CD8-positive, alpha-beta T cell (primary cell): ENCODE measurements at regions of chr1 and their contacts with region 1.

Region 1: GRCh38 chr1:185238447-185238846 is 78.6 kb downstream of the IVNS1ABP start:
- DNase-seq: peak in 2 of 9 experiments; percentile 24 to 55
- ATAC-seq: peak; percentile 38
- H3K4me3 ChIP-seq: no peak overlapping the region
- H3K4me3 Mint-ChIP-seq: no peak overlapping the region
- H3K27ac ChIP-seq: no peak overlapping the region
- H3K27ac Mint-ChIP-seq: no peak overlapping the region
- H3K4me1 ChIP-seq: peaks cover 3% of the 10 kb centered on the region
- H3K4me1 Mint-ChIP-seq: peaks cover 26% of the 10 kb centered on the region
- H3K27me3 ChIP-seq: no peaks in the 10 kb centered on the region
- H3K27me3 Mint-ChIP-seq: no peaks in the 10 kb centered on the region
- CTCF ChIP-seq: peak; percentile 74

Region 2: GRCh38 chr1:185281245-185281644 is 42.8 kb after region 1 on chr1:
- CTCF ChIA-PET with region 1: interaction called, 15 read pairs
- POLR2A ChIA-PET with region 1: interaction called, 6 read pairs
- intact Hi-C with region 1: loop called in 1 of 2 experiments (anchors 2 kb)
- DNase-seq: peak in 7 of 9 experiments; percentile 12 to 72 (median 36)
- ATAC-seq: peak; percentile 92
- H3K4me3 ChIP-seq: no peak overlapping the region
- H3K4me3 Mint-ChIP-seq: peak overlapping the region; percentile 72
- H3K27ac ChIP-seq: peak overlapping the region; percentile 7 to 63
- H3K27ac Mint-ChIP-seq: peak overlapping the region; percentile 96
- H3K4me1 ChIP-seq: peaks cover 47% of the 10 kb centered on the region
- H3K4me1 Mint-ChIP-seq: peaks cover 64% of the 10 kb centered on the region
- H3K27me3 ChIP-seq: no peaks in the 10 kb centered on the region
- H3K27me3 Mint-ChIP-seq: no peaks in the 10 kb centered on the region
- CTCF ChIP-seq: no peak

Region 3: GRCh38 chr1:185559684-185560331 is 321.4 kb after region 1 on chr1:
- CTCF ChIA-PET with region 1: interaction called, 3 read pairs
- POLR2A ChIA-PET with region 1: no interaction called
- intact Hi-C with region 1: loop called in 1 of 2 experiments (anchors 10 kb)
- DNase-seq: peak; percentile 8 to 85 (median 51)
- ATAC-seq: peak; percentile 69
- H3K4me3 ChIP-seq: no peak overlapping the region
- H3K4me3 Mint-ChIP-seq: peak overlapping the region; percentile 40
- H3K27ac ChIP-seq: peak overlapping the region in 1 of 2 experiments; percentile 63
- H3K27ac Mint-ChIP-seq: peak overlapping the region; percentile 70
- H3K4me1 ChIP-seq: peaks cover 30% of the 10 kb centered on the region
- H3K4me1 Mint-ChIP-seq: peaks cover 48% of the 10 kb centered on the region
- H3K27me3 ChIP-seq: no peaks in the 10 kb centered on the region
- H3K27me3 Mint-ChIP-seq: no peaks in the 10 kb centered on the region
- CTCF ChIP-seq: no peak

Region 4: GRCh38 chr1:185670187-185670627 is 431.8 kb after region 1 on chr1:
- CTCF ChIA-PET with region 1: interaction called, 32 read pairs
- POLR2A ChIA-PET with region 1: interaction called, 5 read pairs
- intact Hi-C with region 1: loop called (anchors 1 to 2 kb)
- DNase-seq: peak; percentile 12 to 78 (median 63)
- ATAC-seq: peak; percentile 81
- H3K4me3 ChIP-seq: no peak overlapping the region
- H3K4me3 Mint-ChIP-seq: no peak overlapping the region
- H3K27ac ChIP-seq: no peak overlapping the region
- H3K27ac Mint-ChIP-seq: peak overlapping the region; percentile 78
- H3K4me1 ChIP-seq: peaks cover 14% of the 10 kb centered on the region
- H3K4me1 Mint-ChIP-seq: peaks cover 39% of the 10 kb centered on the region
- H3K27me3 ChIP-seq: no peaks in the 10 kb centered on the region
- H3K27me3 Mint-ChIP-seq: no peaks in the 10 kb centered on the region
- CTCF ChIP-seq: peak; percentile 69

Region 5: DNA sequence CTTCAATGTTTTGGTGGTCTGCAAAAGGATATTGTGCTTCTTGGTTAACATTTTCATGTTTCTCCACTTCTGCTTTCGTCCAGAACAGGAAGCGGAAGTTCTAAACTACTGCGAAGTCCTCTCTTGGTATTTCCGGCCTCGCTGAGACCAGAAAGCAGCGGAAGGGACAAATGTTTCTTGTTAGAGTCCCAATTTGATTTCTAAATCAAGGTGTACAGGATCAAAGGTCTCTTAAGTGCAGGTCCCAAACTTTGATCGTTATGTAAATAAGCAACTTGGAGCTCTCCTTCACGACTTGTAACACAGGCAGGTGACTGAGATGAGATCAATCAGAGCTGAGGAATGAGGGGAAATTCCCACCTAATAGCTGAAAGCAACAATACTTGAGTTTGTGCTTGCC is 455.6 kb after region 1 on chr1:
- CTCF ChIA-PET with region 1: interaction called, 14 read pairs
- POLR2A ChIA-PET with region 1: interaction called, 3 read pairs
- intact Hi-C with region 1: no loop called
- DNase-seq: peak in 5 of 9 experiments; percentile 9 to 68 (median 40)
- ATAC-seq: peak; percentile 48
- H3K4me3 ChIP-seq: peak overlapping the region; percentile 31 to 36
- H3K4me3 Mint-ChIP-seq: peak overlapping the region; percentile 76
- H3K27ac ChIP-seq: peak overlapping the region; percentile 38 to 77
- H3K27ac Mint-ChIP-seq: peak overlapping the region; percentile 91
- H3K4me1 ChIP-seq: peaks cover 18% of the 10 kb centered on the region
- H3K4me1 Mint-ChIP-seq: peaks cover 23% of the 10 kb centered on the region
- H3K27me3 ChIP-seq: no peaks in the 10 kb centered on the region
- H3K27me3 Mint-ChIP-seq: peaks cover 3% of the 10 kb centered on the region
- CTCF ChIP-seq: no peak